IMR-90 (cell line): ENCODE measurements at regions of chr15 and their contacts with region 1.

Region 1: DNA sequence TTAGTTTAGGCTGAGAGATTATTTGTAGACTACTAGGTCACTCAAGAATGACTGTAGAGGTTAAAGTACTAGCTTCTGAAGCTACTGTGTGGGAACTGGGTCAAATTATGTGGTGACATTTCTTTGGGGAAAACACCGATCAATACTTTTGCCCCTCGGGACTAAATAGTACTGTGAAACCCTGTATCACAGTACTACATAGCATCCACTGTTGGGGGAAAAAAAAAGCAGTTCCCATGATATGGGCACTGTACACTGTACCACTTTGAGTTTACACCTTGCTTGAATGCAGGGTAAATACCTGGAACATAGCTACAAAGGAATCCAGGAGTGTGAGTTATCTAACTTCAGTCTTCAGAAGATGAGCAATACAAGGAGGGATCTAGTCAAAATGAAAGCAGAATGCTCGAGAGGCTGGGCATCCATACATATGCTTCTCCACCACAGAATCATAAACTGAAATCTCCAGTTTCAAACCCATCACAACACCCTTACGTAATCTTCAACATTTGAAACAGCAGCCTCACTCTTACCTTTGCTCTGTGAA is 311.4 kb downstream of the UNC13C start:
- DNase-seq: no peak
- ATAC-seq: no peak
- H3K4me3 ChIP-seq: no peak overlapping the region
- H3K27ac ChIP-seq: no peak overlapping the region
- H3K4me1 ChIP-seq: no peaks in the 10 kb centered on the region
- H3K27me3 ChIP-seq: no peaks in the 10 kb centered on the region
- CTCF ChIP-seq: no peak
- POLR2A ChIP-seq: no peak
- RAD21 ChIP-seq: no peak

Region 2: DNA sequence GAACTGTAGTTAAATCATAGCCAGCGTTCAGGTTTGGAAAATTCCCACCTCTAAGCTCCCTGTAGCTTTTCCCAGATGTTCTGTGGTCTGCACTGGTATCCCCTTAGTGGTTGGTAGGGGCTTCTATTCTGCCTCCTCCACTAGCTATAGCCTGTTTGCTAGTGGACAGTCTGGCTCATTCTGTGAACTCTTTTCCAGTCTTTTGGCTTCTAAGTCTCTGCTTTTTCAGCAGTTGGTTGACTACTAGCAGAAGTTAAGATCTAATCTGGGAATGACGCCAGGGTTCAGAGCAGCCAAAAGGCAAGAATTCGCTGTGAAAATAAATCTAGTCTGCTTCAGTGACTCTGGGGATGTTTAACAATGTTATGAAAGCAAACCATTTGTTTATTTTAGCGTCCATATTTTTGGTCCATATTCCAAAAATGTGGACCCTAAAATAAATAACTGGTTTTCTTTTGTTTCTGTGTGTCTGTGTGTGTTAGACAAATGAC is 456.5 kb before region 1 on chr15:
- CTCF ChIA-PET with region 1: no interaction called
- POLR2A ChIA-PET with region 1: no interaction called
- dilution Hi-C with region 1: no loop called
- in situ Hi-C with region 1: no loop called
- intact Hi-C with region 1: no loop called
- DNase-seq: peak; percentile 1
- ATAC-seq: no peak
- H3K4me3 ChIP-seq: no peak overlapping the region
- H3K27ac ChIP-seq: no peak overlapping the region
- H3K4me1 ChIP-seq: no peaks in the 10 kb centered on the region
- H3K27me3 ChIP-seq: no peaks in the 10 kb centered on the region
- CTCF ChIP-seq: no peak
- POLR2A ChIP-seq: no peak
- RAD21 ChIP-seq: no peak

Region 3: DNA sequence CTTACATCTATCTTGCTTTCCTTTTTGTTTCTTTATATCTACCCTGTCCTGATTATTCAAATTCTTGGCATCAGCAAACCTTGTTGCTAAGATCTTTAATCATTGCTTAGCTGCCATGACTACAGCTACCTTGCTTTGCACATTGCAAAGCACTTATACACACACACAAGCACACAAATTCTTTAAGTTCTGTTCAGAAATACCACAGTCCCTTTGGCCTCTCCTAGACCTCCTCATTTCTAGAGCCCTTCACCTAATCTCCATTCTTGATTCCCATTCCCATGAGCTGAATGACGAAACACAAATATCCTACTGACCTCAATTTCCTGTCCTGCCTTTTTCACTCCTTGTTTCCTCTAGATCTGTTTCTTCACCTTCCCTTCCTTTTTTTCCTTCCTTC is 98.1 kb after region 1 on chr15:
- CTCF ChIA-PET with region 1: no interaction called
- POLR2A ChIA-PET with region 1: no interaction called
- dilution Hi-C with region 1: no loop called
- in situ Hi-C with region 1: loop called (anchors 25 kb)
- intact Hi-C with region 1: no loop called
- DNase-seq: no peak
- ATAC-seq: no peak
- H3K4me3 ChIP-seq: no peak overlapping the region
- H3K27ac ChIP-seq: no peak overlapping the region
- H3K4me1 ChIP-seq: no peaks in the 10 kb centered on the region
- H3K27me3 ChIP-seq: no peaks in the 10 kb centered on the region
- CTCF ChIP-seq: no peak
- POLR2A ChIP-seq: no peak
- RAD21 ChIP-seq: no peak

Region 4: DNA sequence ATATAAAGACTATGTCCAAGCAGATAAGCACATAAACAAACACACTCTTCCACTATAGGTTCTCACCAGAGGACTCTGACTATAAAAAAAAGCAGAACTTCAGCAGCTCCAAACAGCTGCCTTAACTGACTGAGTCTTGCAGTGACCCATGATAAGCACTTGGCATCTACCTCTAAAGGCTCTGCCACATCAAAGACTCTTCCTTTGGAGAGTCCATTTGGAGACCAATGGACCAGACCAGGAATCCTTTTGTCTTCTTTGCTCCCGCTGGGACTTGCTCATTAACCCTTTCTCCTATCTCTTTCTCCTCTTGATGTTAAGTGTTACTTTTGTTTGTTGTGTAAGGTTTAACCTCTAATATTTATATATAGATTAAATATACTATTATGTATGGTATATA is 483.0 kb after region 1 on chr15:
- CTCF ChIA-PET with region 1: no interaction called
- POLR2A ChIA-PET with region 1: no interaction called
- dilution Hi-C with region 1: no loop called
- in situ Hi-C with region 1: no loop called
- intact Hi-C with region 1: no loop called
- DNase-seq: no peak
- ATAC-seq: no peak
- H3K4me3 ChIP-seq: no peak overlapping the region
- H3K27ac ChIP-seq: no peak overlapping the region
- H3K4me1 ChIP-seq: no peaks in the 10 kb centered on the region
- H3K27me3 ChIP-seq: no peaks in the 10 kb centered on the region
- CTCF ChIP-seq: no peak
- POLR2A ChIP-seq: no peak
- RAD21 ChIP-seq: no peak